Mammary epithelial cell (primary cell): ENCODE measurements at regions of chr2 and their contacts with region 1.

Region 1: DNA sequence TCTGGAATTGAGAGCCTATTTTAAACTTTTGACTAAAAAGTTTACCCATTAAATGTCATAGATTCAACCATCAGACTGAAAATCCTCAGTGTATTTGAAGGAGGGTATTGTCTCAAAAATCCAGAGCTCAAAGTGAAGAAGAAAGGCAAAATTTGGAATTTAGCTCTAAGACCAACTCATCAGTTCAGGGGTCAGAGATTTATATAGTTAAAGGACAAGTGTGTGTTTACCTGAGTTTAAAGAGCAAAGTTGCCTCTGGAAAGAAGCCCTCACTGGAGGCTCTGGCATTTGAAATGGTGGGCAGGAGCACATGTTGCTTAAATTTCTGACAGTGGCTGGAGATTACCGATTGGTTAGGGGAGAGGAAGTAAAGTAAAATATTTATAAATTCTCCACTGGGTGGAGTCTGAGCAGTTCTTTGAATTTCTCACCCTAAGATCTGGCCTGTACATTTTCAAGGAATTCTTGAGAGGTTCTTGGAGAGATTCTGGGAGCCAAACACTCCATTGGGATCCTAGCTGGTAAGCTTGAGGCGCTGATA is at the start of gene KYNU:
- DNase-seq: peak; percentile 13
- H3K4me3 ChIP-seq: no peak within 1 kb of the TSS
- H3K27ac ChIP-seq: peak within 1 kb of the TSS; percentile 99
- H3K4me1 ChIP-seq: peaks cover 52% of the 10 kb centered on the region
- H3K27me3 ChIP-seq: no peaks in the 10 kb centered on the region
- CTCF ChIP-seq: peak in 1 of 2 donors; percentile 13
- total RNA-seq, gene KYNU: 1.6 to 3.3 TPM

Region 2: GRCh38 chr2:142682528-142682927 is 194.8 kb before region 1 on chr2:
- CTCF ChIA-PET with region 1: interaction called, 4 read pairs
- dilution Hi-C with region 1: no loop called
- in situ Hi-C with region 1: no loop called
- intact Hi-C with region 1: loop called (anchors 2 kb)
- DNase-seq: peak; percentile 17
- H3K4me3 ChIP-seq: no peak overlapping the region
- H3K27ac ChIP-seq: no peak overlapping the region
- H3K4me1 ChIP-seq: no peaks in the 10 kb centered on the region
- H3K27me3 ChIP-seq: no peaks in the 10 kb centered on the region
- CTCF ChIP-seq: peak; percentile 14 to 45

Region 3: GRCh38 chr2:142965443-142965842 is 88.2 kb after region 1 on chr2:
- CTCF ChIA-PET with region 1: no interaction called
- dilution Hi-C with region 1: no loop called
- in situ Hi-C with region 1: no loop called
- intact Hi-C with region 1: no loop called
- DNase-seq: peak; percentile 37
- H3K4me3 ChIP-seq: no peak overlapping the region
- H3K27ac ChIP-seq: no peak overlapping the region
- H3K4me1 ChIP-seq: peaks cover 4% of the 10 kb centered on the region
- H3K27me3 ChIP-seq: no peaks in the 10 kb centered on the region
- CTCF ChIP-seq: no peak

Region 4: GRCh38 chr2:142980561-142981378 is 103.5 kb after region 1 on chr2:
- CTCF ChIA-PET with region 1: no interaction called
- dilution Hi-C with region 1: no loop called
- in situ Hi-C with region 1: no loop called
- intact Hi-C with region 1: loop called (anchors 1 kb)
- DNase-seq: peak; percentile 47
- H3K4me3 ChIP-seq: no peak overlapping the region
- H3K27ac ChIP-seq: peak overlapping the region; percentile 63
- H3K4me1 ChIP-seq: peaks cover 15% of the 10 kb centered on the region
- H3K27me3 ChIP-seq: no peaks in the 10 kb centered on the region
- CTCF ChIP-seq: peak; percentile 42 to 50

Region 5: GRCh38 chr2:142989273-142990204 is 112.3 kb after region 1 on chr2:
- CTCF ChIA-PET with region 1: no interaction called
- dilution Hi-C with region 1: no loop called
- in situ Hi-C with region 1: no loop called
- intact Hi-C with region 1: loop called (anchors 2 kb)
- DNase-seq: peak; percentile 7
- H3K4me3 ChIP-seq: no peak overlapping the region
- H3K27ac ChIP-seq: no peak overlapping the region
- H3K4me1 ChIP-seq: no peaks in the 10 kb centered on the region
- H3K27me3 ChIP-seq: peaks cover 5% of the 10 kb centered on the region
- CTCF ChIP-seq: peak; percentile 45 to 49

Region 6: GRCh38 chr2:143530753-143531152 is 653.5 kb after region 1 on chr2:
- CTCF ChIA-PET with region 1: no interaction called
- dilution Hi-C with region 1: no loop called
- in situ Hi-C with region 1: no loop called
- intact Hi-C with region 1: no loop called
- DNase-seq: peak; percentile 12
- H3K4me3 ChIP-seq: no peak overlapping the region
- H3K27ac ChIP-seq: no peak overlapping the region
- H3K4me1 ChIP-seq: no peaks in the 10 kb centered on the region
- H3K27me3 ChIP-seq: no peaks in the 10 kb centered on the region
- CTCF ChIP-seq: no peak